K562 (cell line): ENCODE measurements at regions of chr12 and their contacts with region 1.

Region 1: DNA sequence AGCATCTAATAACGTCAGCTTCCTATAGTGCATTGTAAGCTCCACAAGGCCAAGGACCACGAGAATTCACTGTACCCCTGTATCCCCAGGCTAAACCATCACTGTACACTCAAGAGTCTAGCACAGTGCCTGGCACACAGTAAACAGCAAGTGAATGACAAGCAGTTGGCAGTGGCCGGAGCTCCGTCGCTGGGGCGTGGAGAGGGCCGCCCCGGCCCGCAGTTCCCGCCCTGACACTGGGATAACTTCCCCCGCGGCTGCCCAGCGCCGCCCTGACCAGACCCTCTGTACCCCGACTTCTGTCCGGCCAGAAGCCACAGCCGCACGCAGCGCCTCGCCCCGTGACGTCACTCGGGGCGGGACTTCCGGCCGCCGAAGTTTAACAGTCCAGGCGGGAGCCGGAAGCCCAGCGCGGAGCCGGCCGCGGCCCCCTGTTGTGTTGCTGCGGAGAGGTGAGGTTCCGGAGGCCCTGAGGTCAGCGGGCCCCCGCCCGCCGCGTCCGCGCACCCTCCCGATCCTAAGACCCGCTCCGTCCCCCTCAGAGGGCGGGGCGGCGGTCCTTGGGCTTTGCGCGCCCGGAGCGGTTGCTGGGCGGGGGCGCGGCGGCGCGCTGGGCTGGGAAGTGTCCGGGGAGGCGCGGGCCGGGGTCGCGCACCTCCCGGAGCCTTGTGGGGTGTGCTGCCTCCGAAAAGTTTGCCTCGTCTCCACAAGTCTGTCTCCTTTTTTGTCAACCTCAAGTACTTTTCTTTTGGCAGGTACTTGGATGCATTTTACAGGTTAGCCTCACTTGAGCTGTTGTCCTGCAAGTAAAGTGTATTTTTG is at the start of gene NEDD1:
- DNase-seq: peak; percentile 93 to 95 (median 94)
- ATAC-seq: peak; percentile 98
- H3K4me3 ChIP-seq: peak within 1 kb of the TSS; percentile 68
- H3K27ac ChIP-seq: peak within 1 kb of the TSS; percentile 85
- H3K4me1 ChIP-seq: peaks cover 8 to 12% of the 10 kb centered on the region in 2 experiments; a peak in 4 of 5 replicates
- H3K27me3 ChIP-seq: no peaks in the 10 kb centered on the region
- CTCF ChIP-seq: no peak
- EP300 ChIP-seq: no peak
- POLR2A ChIP-seq: peak; percentile 83
- RAD21 ChIP-seq: no peak
- polyA plus RNA-seq, gene NEDD1: 10.5 to 14.8 TPM

Region 2: DNA sequence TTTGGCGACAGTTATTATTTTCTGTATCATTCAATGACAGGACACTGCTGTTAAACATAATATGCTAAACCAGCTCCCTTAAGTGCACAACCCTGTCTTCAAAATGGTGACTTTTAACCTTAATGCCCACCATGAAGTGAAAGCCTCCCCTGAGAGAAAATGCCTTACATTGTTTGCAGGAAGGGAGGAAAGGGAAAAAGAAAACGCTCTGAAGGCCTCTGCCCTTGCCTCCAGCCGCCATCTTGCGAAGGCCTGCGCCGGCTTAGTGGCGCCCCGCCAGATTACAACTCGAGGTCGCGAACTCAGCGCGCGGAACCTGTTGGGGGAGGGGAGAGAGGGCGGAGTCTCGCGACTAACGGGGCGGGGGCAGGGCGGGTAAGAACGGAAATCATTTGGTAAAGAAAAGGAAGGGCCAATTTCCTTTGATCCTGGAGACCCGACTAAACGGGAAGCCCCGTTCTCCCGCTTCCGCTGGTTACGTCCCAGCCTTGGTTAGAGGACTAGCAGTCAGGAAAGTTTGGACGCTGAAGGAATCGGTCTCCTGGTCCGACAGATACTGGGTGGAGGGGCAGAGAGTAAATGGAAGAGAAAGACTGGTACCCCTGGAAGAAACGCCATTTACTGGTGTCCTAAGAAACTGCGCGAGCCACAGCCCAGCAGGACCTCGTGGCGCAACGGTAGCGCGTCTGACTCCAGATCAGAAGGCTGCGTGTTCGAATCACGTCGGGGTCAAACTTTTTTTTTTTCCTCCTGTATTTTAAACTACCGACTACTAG is 1596.7 kb after region 1 on chr12:
- CTCF ChIA-PET with region 1: no interaction called
- POLR2A ChIA-PET with region 1: no interaction called
- in situ Hi-C with region 1: no loop called
- intact Hi-C with region 1: loop called (anchors 10 kb)
- DNase-seq: peak; percentile 84 to 96 (median 86)
- ATAC-seq: peak; percentile 86
- H3K4me3 ChIP-seq: peak overlapping the region; percentile 59
- H3K27ac ChIP-seq: peak overlapping the region; percentile 99
- H3K4me1 ChIP-seq: peaks cover 2 to 5% of the 10 kb centered on the region in 2 experiments; a peak in 3 of 5 replicates
- H3K27me3 ChIP-seq: no peaks in the 10 kb centered on the region
- CTCF ChIP-seq: 0 out of 6 replicates have a peak, but pooled peaks of 2 of the 3 experiments have one; percentile 1 to 2
- EP300 ChIP-seq: peak; percentile 64; the same call in 1 of the 2 replicates
- POLR2A ChIP-seq: peak; percentile 81
- RAD21 ChIP-seq: peak in 1 of 2 experiments; percentile 6; a peak in 1 of 4 replicates